Activated CD4-positive, alpha-beta T cell treated with anti-CD3 and anti-CD28 coated beads, Interleukin-2, amount 10 ng/mL, durations not matched to agents 24 days and 14 days (primary cell): ENCODE measurements at regions of chr18 and their contacts with region 1.

Region 1: GRCh38 chr18:11980555-11981382 is 538 bp upstream of the IMPA2 start:
- DNase-seq: peak; percentile 99
- H3K4me3 Mint-ChIP-seq: peak overlapping the region; percentile 91
- H3K27ac Mint-ChIP-seq: peak overlapping the region; percentile 89
- H3K4me1 Mint-ChIP-seq: peaks cover 17% of the 10 kb centered on the region
- H3K27me3 Mint-ChIP-seq: peaks cover 10% of the 10 kb centered on the region

Region 2: GRCh38 chr18:11908182-11909060 is 72.3 kb before region 1 on chr18 and contains the start of gene MPPE1:
- intact Hi-C with region 1: loop called (anchors 1 kb)
- DNase-seq: peak; percentile 97
- H3K4me3 Mint-ChIP-seq: peak within 1 kb of the TSS; percentile 95
- H3K27ac Mint-ChIP-seq: peak within 1 kb of the TSS; percentile 94
- H3K4me1 Mint-ChIP-seq: peaks cover 19% of the 10 kb centered on the region
- H3K27me3 Mint-ChIP-seq: no peaks in the 10 kb centered on the region
- total RNA-seq, gene MPPE1: 39.2 and 45.8 TPM in 2 replicates

Region 3: DNA sequence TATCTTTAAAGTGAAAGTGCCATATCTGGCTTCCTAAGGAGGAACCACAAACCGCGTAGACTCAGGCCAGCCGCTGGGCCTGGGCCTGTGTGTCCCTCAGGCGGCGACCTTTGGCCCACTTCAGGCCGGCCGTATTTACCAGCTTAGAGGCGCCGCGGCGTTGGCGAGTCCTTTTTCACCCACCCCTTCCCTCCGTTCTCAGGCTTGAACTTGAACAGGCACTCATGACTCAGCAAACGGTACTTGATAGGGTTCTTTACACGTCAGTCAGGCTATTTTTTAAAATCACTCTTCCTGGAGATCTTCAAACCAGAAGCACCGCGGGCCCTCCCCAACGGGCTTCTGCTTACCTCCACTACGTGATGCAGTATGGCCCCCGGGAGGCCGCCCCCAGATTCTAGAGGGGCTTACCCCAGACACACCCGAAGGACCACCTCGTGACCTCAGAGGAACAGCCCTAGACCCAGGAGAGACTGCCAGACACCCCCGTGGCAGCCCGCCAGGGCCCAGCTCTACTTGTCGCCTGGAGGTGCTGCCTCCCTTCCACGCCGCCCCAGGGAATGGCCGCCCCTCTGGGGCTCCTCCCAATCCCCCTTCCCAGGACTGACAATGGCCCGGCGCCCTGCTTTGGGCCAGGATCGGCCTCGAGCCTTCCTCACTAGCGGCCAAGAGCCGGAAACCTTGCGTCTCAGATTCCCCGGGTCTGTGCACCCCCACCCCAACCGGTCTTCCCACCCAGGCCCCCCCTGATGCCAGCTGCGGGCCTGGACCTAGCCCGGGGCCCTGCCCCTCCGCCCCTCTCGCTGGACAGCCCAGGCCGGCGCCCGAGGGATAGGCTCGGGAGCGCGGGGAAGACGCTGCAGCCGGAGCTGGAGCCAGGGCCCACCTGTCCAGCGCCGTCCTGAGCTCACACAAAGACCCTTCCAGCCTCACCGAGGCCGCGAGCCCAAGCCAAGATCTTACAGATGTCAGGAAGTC is 33.3 kb before region 1 on chr18:
- intact Hi-C with region 1: loop called (anchors 1 kb)
- DNase-seq: peak; percentile 86
- H3K4me3 Mint-ChIP-seq: peak overlapping the region; percentile 84
- H3K27ac Mint-ChIP-seq: peak overlapping the region; percentile 81
- H3K4me1 Mint-ChIP-seq: peaks cover 8% of the 10 kb centered on the region
- H3K27me3 Mint-ChIP-seq: no peaks in the 10 kb centered on the region

Region 4: GRCh38 chr18:12038639-12039417 is 58.1 kb after region 1 on chr18:
- intact Hi-C with region 1: loop called (anchors 2 kb)
- DNase-seq: peak; percentile 94
- H3K4me3 Mint-ChIP-seq: peak overlapping the region; percentile 82
- H3K27ac Mint-ChIP-seq: peak overlapping the region; percentile 41
- H3K4me1 Mint-ChIP-seq: peaks cover 17% of the 10 kb centered on the region
- H3K27me3 Mint-ChIP-seq: peaks cover 9% of the 10 kb centered on the region